AG04449 (cell line): ENCODE measurements at regions of chr1 and their contacts with region 1.

Region 1: GRCh38 chr1:65209005-65209885 is 61.2 kb downstream of the AK4 start:
- DNase-seq: no peak
- H3K4me3 ChIP-seq: no peak overlapping the region
- CTCF ChIP-seq: peak; percentile 51

Region 2: GRCh38 chr1:65059930-65060538 is 149.2 kb before region 1 on chr1:
- CTCF ChIA-PET with region 1: interaction called, 25 read pairs
- POLR2A ChIA-PET with region 1: no interaction called
- DNase-seq: no peak
- H3K4me3 ChIP-seq: no peak overlapping the region
- CTCF ChIP-seq: peak; percentile 27

Region 3: GRCh38 chr1:65066766-65067490 is 142.3 kb before region 1 on chr1:
- CTCF ChIA-PET with region 1: interaction called, 25 read pairs
- POLR2A ChIA-PET with region 1: no interaction called
- DNase-seq: no peak
- H3K4me3 ChIP-seq: peak overlapping the region; percentile 68
- CTCF ChIP-seq: no peak

Region 4: GRCh38 chr1:65195495-65196417 is 13.5 kb before region 1 on chr1:
- CTCF ChIA-PET with region 1: interaction called, 24 read pairs
- POLR2A ChIA-PET with region 1: no interaction called
- DNase-seq: no peak
- H3K4me3 ChIP-seq: no peak overlapping the region
- CTCF ChIP-seq: no peak

Region 5: DNA sequence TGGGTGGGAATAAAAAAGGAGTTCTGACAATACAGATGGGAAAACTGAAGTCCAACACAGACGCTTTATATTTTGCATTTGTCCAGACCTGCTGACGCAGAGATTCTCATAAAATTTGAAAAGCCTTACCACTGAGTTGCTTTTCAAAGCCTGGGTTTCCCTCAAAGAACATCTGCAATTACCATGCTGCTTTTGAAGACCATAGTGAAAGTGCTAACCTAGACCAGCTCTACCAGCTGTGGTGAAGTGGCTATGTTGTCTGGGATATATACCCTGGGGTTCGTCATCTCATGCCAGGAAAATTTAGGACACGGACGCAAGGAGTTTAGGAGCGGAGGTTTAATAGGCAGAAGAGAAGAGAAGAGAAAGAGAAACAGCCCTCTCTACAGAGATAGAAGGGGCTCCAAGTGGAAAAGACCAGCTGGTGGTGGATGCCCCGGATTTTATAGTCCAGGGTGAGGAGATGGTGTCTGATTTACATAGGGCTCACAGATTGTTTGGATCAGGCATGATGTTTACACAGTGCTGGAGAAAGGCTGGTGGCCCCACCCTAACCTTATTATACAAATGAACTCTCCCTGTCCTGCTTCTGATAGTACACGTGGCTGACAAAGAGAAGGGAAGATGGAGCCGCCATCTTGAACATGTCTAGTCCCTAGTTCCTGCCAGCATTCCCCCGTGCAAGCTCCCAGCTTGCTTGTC is 12.5 kb after region 1 on chr1:
- CTCF ChIA-PET with region 1: interaction called, 37 read pairs
- POLR2A ChIA-PET with region 1: no interaction called
- DNase-seq: no peak
- H3K4me3 ChIP-seq: no peak overlapping the region
- CTCF ChIP-seq: no peak

Region 6: DNA sequence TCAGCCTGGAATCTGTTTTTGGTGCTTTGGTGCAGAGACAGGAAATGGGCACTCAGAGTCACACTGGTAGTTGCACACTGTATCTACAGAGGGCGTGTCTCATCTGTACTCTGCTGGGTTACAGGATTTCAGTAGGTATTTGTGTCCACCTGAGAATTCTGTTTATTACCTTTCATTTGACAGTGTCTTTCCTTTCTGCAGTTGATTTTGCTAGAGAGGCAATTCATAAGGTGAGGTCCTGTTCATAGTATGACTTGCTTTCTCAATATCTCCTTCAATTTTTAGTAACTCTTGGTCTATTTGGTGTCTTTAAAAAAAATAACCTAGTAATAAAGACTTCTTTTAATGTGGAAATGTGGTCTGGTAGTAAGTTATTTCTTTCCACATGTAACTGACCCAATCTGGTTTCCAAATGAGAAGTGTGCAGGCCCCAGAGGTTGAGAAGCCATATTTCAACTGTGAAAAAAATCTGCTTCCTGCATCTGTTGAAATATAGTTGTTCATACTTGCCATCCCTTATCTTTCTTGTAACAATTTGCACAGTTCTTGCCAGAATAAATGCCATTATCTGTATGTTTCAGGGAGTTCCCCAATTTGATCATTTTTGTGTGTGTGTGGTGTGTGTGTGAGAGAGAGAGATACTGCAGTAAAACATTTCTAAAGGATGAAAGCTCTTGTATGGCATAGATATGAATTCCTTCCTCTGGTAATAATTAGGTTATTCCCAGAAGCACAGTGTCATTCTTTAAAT is 21.7 kb after region 1 on chr1:
- CTCF ChIA-PET with region 1: interaction called, 18 read pairs
- POLR2A ChIA-PET with region 1: no interaction called
- DNase-seq: no peak
- H3K4me3 ChIP-seq: no peak overlapping the region
- CTCF ChIP-seq: no peak